Lower leg skin (tissue), 4 donors: ENCODE measurements at regions of chr2 and their contacts with region 1.

Region 1: DNA sequence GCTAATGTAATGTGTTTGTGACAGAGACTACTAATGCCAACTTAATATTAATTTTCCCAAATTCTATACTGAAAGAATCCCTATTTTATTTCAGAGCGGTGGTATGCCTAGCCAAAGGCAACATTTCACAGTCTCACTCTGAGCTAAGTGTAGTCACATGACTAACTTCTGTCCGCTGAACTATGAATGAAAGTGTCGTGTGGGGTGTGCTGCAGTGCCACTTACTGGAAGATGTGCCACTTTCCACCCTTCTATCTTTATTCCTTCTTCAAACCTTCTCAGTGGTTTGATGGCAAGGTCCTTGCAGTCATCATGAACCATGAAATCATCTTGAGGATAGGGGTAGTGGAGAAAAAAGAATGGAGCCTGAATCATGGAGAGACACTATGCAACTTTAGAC is 47.3 kb upstream of the C1D start:
- DNase-seq: no peak
- H3K4me3 ChIP-seq: no peak overlapping the region
- CTCF ChIP-seq: no peak
- POLR2A ChIP-seq: no peak

Region 2: GRCh38 chr2:68434981-68435380 is 324.9 kb after region 1 on chr2:
- intact Hi-C with region 1: loop called (anchors 10 kb)
- DNase-seq: no peak
- H3K4me3 ChIP-seq: no peak overlapping the region
- CTCF ChIP-seq: no peak
- POLR2A ChIP-seq: no peak